ENCODE measurements at regions of chr15 and their contacts with region 1.

Region 1: DNA sequence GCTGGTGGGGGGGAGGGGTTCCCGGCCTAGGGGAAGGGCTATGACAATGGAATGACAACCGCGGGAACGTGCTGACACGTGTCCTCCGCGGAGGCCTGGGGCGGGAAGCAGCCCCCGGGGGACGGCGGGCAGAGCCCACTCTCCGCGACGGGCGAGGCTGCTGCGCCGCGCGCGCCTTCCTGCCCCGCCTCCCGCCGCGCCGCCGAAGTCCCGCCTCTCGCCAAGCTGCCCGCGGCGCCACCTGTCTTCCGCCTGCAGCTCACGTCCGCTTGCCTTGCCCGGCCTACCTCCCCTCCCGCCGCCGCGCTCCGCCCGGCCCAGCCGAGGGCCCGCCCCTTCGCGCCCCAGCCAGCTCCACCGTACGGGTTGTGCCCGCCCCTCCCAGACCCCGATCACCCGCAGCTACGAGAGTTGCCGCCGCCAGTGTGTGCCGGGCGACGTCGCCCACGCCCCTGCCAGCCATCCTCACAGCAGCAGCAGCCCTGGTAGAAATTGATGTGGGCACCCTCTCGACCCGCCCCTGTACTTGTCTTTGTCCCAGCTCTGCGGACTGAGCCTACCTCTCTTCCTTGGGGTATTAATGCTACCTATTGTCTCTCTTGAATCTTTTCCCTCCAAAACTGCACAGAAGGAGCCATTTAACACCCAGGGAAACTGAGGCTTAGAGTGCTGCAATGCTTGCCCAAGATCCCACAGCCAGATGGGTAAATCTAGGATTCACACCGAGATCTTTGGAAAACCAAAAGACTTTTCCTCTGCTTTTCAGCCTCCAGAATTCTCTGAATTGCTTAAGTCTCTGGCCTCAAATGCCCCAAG is at the start of gene PARP16:
- DNase-seq: peak; percentile 80 to 97 (median 92)
- ATAC-seq: peak; percentile 94
- H3K4me3 ChIP-seq: peak within 1 kb of the TSS; percentile 71 to 88
- H3K4me3 Mint-ChIP-seq: peak within 1 kb of the TSS; percentile 90
- H3K27ac ChIP-seq: peak within 1 kb of the TSS; percentile 69 to 81
- H3K27ac Mint-ChIP-seq: peak within 1 kb of the TSS; percentile 86
- H3K4me1 ChIP-seq: peaks cover 27% of the 10 kb centered on the region
- H3K4me1 Mint-ChIP-seq: peaks cover 45% of the 10 kb centered on the region
- H3K27me3 ChIP-seq: no peaks in the 10 kb centered on the region
- H3K27me3 Mint-ChIP-seq: no peaks in the 10 kb centered on the region
- CTCF ChIP-seq: no peak
- total RNA-seq, gene PARP16: 9.9 to 11.5 TPM

Region 2: DNA sequence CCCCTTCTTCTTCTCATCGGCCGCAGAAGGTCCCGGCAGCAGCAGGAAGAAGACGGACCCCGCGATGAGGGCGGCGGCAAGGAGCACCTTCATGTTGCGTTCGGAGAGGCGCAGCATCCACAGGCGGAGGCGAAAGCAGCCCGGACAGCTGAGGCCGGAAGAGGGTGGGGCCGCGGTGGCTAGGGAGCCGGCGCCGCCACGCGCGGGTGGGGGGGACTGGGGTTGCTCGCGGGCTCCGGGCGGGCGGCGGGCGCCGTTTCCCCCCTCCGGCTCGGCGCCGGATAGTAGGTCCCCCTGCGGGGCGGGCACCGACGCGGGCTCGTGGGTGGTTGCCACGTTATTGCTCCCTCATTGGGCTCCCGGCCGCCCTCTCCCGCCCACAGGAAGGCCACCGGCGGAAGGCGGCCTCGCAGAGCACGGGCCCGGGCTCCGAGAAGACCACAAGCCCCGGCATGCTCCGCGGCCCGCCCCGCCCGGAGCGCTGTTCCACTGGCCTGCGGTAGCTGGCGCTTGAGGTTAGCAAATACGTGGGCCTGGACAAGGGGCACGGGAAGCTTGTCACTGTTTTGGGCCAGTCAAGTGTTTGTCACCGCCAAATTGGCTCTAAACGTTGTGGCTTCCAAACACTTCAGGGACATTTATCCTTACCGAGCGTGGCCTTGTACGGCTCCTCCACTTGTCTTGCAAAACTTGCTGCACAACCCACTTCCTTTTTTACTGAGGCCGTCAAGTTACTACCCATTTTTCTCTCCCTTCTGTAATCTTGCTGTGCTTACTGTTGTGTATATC is 1123.8 kb before region 1 on chr15 and contains the start of gene PPIB:
- CTCF ChIA-PET with region 1: no interaction called
- POLR2A ChIA-PET with region 1: no interaction called
- intact Hi-C with region 1: loop called in 1 of 2 experiments (anchors 10 kb)
- DNase-seq: peak; percentile 93 to 98 (median 96)
- ATAC-seq: peak; percentile 93
- H3K4me3 ChIP-seq: peak within 1 kb of the TSS; percentile 88 to 92
- H3K4me3 Mint-ChIP-seq: peak within 1 kb of the TSS; percentile 90
- H3K27ac ChIP-seq: peak within 1 kb of the TSS; percentile 79 to 88
- H3K27ac Mint-ChIP-seq: peak within 1 kb of the TSS; percentile 87
- H3K4me1 ChIP-seq: peaks cover 38% of the 10 kb centered on the region
- H3K4me1 Mint-ChIP-seq: peaks cover 41% of the 10 kb centered on the region
- H3K27me3 ChIP-seq: no peaks in the 10 kb centered on the region
- H3K27me3 Mint-ChIP-seq: no peaks in the 10 kb centered on the region
- CTCF ChIP-seq: no peak
- total RNA-seq, gene PPIB: 148 to 156 TPM

Region 3: GRCh38 chr15:64702816-64703646 is 583.9 kb before region 1 on chr15:
- CTCF ChIA-PET with region 1: no interaction called
- POLR2A ChIA-PET with region 1: no interaction called
- intact Hi-C with region 1: loop called in 1 of 2 experiments (anchors 10 kb)
- DNase-seq: peak; percentile 90 to 97 (median 95)
- ATAC-seq: peak; percentile 95
- H3K4me3 ChIP-seq: peak overlapping the region; percentile 79 to 86
- H3K4me3 Mint-ChIP-seq: peak overlapping the region; percentile 91
- H3K27ac ChIP-seq: peak overlapping the region; percentile 60 to 66
- H3K27ac Mint-ChIP-seq: peak overlapping the region; percentile 92
- H3K4me1 ChIP-seq: peaks cover 47% of the 10 kb centered on the region
- H3K4me1 Mint-ChIP-seq: peaks cover 51% of the 10 kb centered on the region
- H3K27me3 ChIP-seq: no peaks in the 10 kb centered on the region
- H3K27me3 Mint-ChIP-seq: no peaks in the 10 kb centered on the region
- CTCF ChIP-seq: no peak

Region 4: GRCh38 chr15:64893481-64894394 is 393.2 kb before region 1 on chr15:
- CTCF ChIA-PET with region 1: no interaction called
- POLR2A ChIA-PET with region 1: no interaction called
- intact Hi-C with region 1: loop called (anchors 2 to 5 kb)
- DNase-seq: peak; percentile 82 to 98 (median 95)
- ATAC-seq: peak; percentile 70
- H3K4me3 ChIP-seq: peak overlapping the region; percentile 42 to 64
- H3K4me3 Mint-ChIP-seq: peak overlapping the region; percentile 87
- H3K27ac ChIP-seq: peak overlapping the region; percentile 73 to 88
- H3K27ac Mint-ChIP-seq: peak overlapping the region; percentile 99
- H3K4me1 ChIP-seq: peaks cover 57% of the 10 kb centered on the region
- H3K4me1 Mint-ChIP-seq: peaks cover 66% of the 10 kb centered on the region
- H3K27me3 ChIP-seq: no peaks in the 10 kb centered on the region
- H3K27me3 Mint-ChIP-seq: no peaks in the 10 kb centered on the region
- CTCF ChIP-seq: no peak

Region 5: DNA sequence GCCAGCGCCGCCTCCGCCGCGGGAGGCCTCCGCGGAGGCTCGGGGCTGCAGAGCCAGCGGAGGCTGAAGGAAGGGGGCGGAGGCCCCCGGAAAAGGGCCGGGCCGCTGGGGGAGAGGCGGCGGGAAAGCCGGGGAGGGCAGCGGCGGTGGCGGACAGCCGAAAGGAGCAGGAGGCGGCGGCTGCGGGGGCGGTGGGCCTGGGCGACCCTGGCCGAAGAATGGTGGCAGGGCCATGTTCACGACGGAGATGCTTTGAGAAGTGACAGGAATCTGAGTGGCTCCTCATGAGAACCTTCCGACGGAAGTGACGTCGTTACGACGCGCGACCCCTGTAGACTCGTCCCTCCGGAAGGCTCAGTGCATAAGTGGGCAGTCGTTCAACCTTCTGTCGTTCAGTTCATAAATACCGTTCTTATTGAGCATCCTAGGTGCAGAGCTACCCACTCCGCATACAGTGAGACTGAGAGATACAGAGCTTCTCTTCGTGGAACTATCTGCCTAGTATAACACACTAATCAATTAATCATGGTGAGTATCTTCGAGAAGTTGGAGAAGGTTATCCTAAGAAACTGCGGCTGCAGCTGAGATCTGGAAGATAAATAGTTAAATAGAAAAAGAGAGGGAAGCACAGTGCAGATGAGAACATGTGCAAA is 153.2 kb before region 1 on chr15 and contains the start of gene PDCD7:
- CTCF ChIA-PET with region 1: no interaction called
- POLR2A ChIA-PET with region 1: interaction called, 5 read pairs
- intact Hi-C with region 1: loop called in 1 of 2 experiments (anchors 2 kb)
- DNase-seq: peak; percentile 60 to 95 (median 86)
- ATAC-seq: peak; percentile 93
- H3K4me3 ChIP-seq: peak within 1 kb of the TSS; percentile 62 to 78
- H3K4me3 Mint-ChIP-seq: peak within 1 kb of the TSS; percentile 91
- H3K27ac ChIP-seq: peak within 1 kb of the TSS; percentile 80 to 83
- H3K27ac Mint-ChIP-seq: peak within 1 kb of the TSS; percentile 96
- H3K4me1 ChIP-seq: peaks cover 26% of the 10 kb centered on the region
- H3K4me1 Mint-ChIP-seq: peaks cover 31% of the 10 kb centered on the region
- H3K27me3 ChIP-seq: no peaks in the 10 kb centered on the region
- H3K27me3 Mint-ChIP-seq: no peaks in the 10 kb centered on the region
- CTCF ChIP-seq: no peak
- total RNA-seq, gene PDCD7: 20.7 to 21.7 TPM

Region 6: GRCh38 chr15:65298731-65299130 is 11.8 kb after region 1 on chr15:
- CTCF ChIA-PET with region 1: interaction called, 20 read pairs
- POLR2A ChIA-PET with region 1: interaction called, 50 read pairs
- intact Hi-C with region 1: loop called (anchors 1 kb)
- DNase-seq: no peak
- ATAC-seq: no peak
- H3K4me3 ChIP-seq: peak overlapping the region in 1 of 2 experiments; percentile 6
- H3K4me3 Mint-ChIP-seq: peak overlapping the region; percentile 88
- H3K27ac ChIP-seq: peak overlapping the region in 1 of 2 experiments; percentile 41
- H3K27ac Mint-ChIP-seq: peak overlapping the region; percentile 84
- H3K4me1 ChIP-seq: peaks cover 36% of the 10 kb centered on the region
- H3K4me1 Mint-ChIP-seq: peaks cover 45% of the 10 kb centered on the region
- H3K27me3 ChIP-seq: no peaks in the 10 kb centered on the region
- H3K27me3 Mint-ChIP-seq: no peaks in the 10 kb centered on the region
- CTCF ChIP-seq: no peak

Measured in CD8-positive, alpha-beta T cell (primary cell).